ENCODE measurements at regions of chrX and their contacts with region 1.

Region 1: GRCh38 chrX:107429090-107429489 is 20.4 kb upstream of the FRMPD3 start:
- DNase-seq: peak in 3 of 9 donors; percentile 9 to 19 (median 9)
- ATAC-seq: no peak
- H3K4me3 ChIP-seq: no peak overlapping the region
- H3K4me3 Mint-ChIP-seq: no peak overlapping the region
- H3K27ac ChIP-seq: no peak overlapping the region
- H3K27ac Mint-ChIP-seq: no peak overlapping the region
- H3K4me1 ChIP-seq: no peaks in the 10 kb centered on the region
- H3K4me1 Mint-ChIP-seq: no peaks in the 10 kb centered on the region
- H3K27me3 ChIP-seq: no peaks in the 10 kb centered on the region
- H3K27me3 Mint-ChIP-seq: peaks cover 0 to 6% (median 0%) of the 10 kb centered on the region in 5 donors

Region 2: GRCh38 chrX:107102975-107103374 is 326.1 kb before region 1 on chrX:
- CTCF ChIA-PET with region 1: no interaction called
- POLR2A ChIA-PET with region 1: no interaction called
- intact Hi-C with region 1: loop called in 1 of 2 experiments (anchors 5 kb)
- DNase-seq: no peak
- ATAC-seq: no peak
- H3K4me3 ChIP-seq: no peak overlapping the region
- H3K4me3 Mint-ChIP-seq: no peak overlapping the region
- H3K27ac ChIP-seq: no peak overlapping the region
- H3K27ac Mint-ChIP-seq: no peak overlapping the region
- H3K4me1 ChIP-seq: no peaks in the 10 kb centered on the region
- H3K4me1 Mint-ChIP-seq: peaks cover 4 to 27% (median 14%) of the 10 kb centered on the region in 7 donors
- H3K27me3 ChIP-seq: no peaks in the 10 kb centered on the region
- H3K27me3 Mint-ChIP-seq: no peaks in the 10 kb centered on the region

Region 3: DNA sequence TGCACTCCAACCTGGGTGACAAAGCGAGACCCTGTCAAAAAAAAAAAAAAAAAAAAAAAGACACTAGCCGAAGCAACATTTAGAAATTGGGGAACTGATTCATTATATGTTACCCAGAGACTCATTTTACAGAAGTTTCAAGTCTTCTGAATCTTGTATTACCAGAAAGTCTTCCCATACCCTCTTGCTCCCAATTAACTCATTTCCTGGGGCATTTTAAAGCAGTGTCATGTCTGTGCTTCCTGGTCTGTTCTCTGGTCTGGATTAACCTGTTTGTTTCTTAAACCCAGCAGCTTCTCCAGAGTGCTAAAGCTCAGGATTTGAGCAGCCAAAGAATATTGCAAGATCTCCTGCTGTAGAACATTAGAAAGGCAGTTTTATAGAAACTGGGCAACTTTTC is 64.1 kb after region 1 on chrX:
- CTCF ChIA-PET with region 1: no interaction called
- POLR2A ChIA-PET with region 1: no interaction called
- intact Hi-C with region 1: no loop called
- DNase-seq: no peak
- ATAC-seq: no peak
- H3K4me3 ChIP-seq: no peak overlapping the region
- H3K4me3 Mint-ChIP-seq: no peak overlapping the region
- H3K27ac ChIP-seq: no peak overlapping the region
- H3K27ac Mint-ChIP-seq: no peak overlapping the region
- H3K4me1 ChIP-seq: no peaks in the 10 kb centered on the region
- H3K4me1 Mint-ChIP-seq: no peaks in the 10 kb centered on the region
- H3K27me3 ChIP-seq: no peaks in the 10 kb centered on the region
- H3K27me3 Mint-ChIP-seq: peaks cover 0 to 7% (median 5%) of the 10 kb centered on the region in 5 donors

Measured in naive thymus-derived CD4-positive, alpha-beta T cell (primary cell).